Mammary epithelial cell (primary cell): ENCODE measurements at regions of chr19 and their contacts with region 1.

Region 1: GRCh38 chr19:35404879-35405622 is 34.2 kb downstream of the GPR42 start:
- DNase-seq: peak; percentile 98
- H3K4me3 ChIP-seq: no peak overlapping the region
- H3K27ac ChIP-seq: peak overlapping the region; percentile 51
- H3K4me1 ChIP-seq: peaks cover 9% of the 10 kb centered on the region
- H3K27me3 ChIP-seq: no peaks in the 10 kb centered on the region
- CTCF ChIP-seq: no peak

Region 2: DNA sequence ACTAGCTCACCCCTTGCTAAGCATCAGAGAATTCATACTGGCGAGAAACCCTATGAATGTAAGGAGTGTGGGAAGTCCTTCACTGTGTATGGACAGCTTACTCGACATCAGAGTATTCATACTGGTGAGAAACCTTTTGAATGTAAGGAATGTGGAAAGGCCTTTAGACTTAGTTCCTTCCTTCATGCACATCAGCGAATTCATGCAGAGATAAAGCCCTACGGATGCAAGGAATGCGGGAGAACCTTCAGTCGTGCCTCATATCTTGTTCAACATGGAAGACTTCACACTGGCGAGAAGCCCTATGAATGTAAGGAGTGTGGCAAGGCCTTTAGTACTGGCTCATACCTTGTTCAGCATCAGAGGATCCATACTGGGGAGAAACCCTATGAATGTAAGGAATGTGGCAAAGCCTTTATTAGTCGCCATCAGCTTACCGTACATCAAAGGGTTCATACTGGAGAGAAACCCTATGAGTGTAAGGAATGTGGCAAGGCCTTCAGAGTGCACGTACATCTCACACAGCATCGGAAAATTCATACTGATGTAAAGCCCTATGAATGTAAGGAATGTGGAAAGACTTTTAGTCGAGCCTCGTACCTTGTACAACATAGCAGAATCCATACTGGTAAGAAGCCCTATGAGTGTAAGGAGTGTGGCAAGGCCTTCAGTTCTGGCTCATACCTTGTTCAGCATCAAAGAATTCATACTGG is 461.0 kb before region 1 on chr19:
- CTCF ChIA-PET with region 1: no interaction called
- dilution Hi-C with region 1: no loop called
- in situ Hi-C with region 1: no loop called
- intact Hi-C with region 1: no loop called
- DNase-seq: no peak
- H3K4me3 ChIP-seq: no peak overlapping the region
- H3K27ac ChIP-seq: no peak overlapping the region
- H3K4me1 ChIP-seq: no peaks in the 10 kb centered on the region
- H3K27me3 ChIP-seq: no peaks in the 10 kb centered on the region
- CTCF ChIP-seq: no peak

Region 3: GRCh38 chr19:35449053-35449687 is 44.1 kb after region 1 on chr19:
- CTCF ChIA-PET with region 1: no interaction called
- dilution Hi-C with region 1: no loop called
- in situ Hi-C with region 1: no loop called
- intact Hi-C with region 1: loop called (anchors 5 kb)
- DNase-seq: peak; percentile 46
- H3K4me3 ChIP-seq: no peak overlapping the region
- H3K27ac ChIP-seq: no peak overlapping the region
- H3K4me1 ChIP-seq: no peaks in the 10 kb centered on the region
- H3K27me3 ChIP-seq: peaks cover 6% of the 10 kb centered on the region
- CTCF ChIP-seq: no peak